B cell (primary cell): ENCODE measurements at regions of chr17 and their contacts with region 1.

Region 1: DNA sequence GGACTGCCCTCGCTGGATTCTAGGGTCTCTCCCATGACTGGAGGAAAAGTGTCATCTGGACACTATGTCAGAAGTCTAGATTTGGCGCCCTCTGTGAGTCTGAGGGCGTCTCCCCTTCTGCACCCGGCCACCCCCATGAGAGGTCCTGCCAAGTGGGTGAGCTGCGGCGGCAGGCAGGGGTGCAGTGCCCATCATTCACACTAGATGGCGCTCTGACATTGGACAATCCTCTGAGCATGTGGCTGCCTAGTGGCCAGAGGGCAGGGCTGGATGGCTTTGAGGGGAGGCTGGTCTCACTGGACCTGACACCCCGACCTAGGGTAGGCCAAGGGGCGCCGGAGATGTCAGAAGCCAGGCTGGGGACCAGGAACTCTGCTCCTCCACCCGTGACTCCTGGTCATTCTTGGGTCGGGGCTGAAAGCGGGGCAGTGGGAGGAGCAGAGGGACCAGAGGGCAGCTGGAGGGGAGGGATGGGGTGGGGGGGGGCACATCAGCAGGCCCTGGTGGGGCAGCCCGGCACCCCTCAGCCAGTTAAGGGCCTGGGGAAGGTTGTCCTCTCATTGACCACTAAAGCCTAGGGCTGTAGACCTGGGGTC is 28.0 kb downstream of the MRM1 start:
- DNase-seq: peak; percentile 80
- ATAC-seq: peak; percentile 93
- H3K4me3 ChIP-seq: no peak overlapping the region
- H3K4me3 Mint-ChIP-seq: no peak overlapping the region
- H3K27ac ChIP-seq: no peak overlapping the region
- H3K27ac Mint-ChIP-seq: no peak overlapping the region
- H3K4me1 ChIP-seq: no peaks in the 10 kb centered on the region
- H3K4me1 Mint-ChIP-seq: no peaks in the 10 kb centered on the region
- H3K27me3 ChIP-seq: peaks cover 0 to 5% (median 2%) of the 10 kb centered on the region in 4 experiments
- H3K27me3 Mint-ChIP-seq: peaks cover 15% of the 10 kb centered on the region
- CTCF ChIP-seq: peak; percentile 99

Region 2: GRCh38 chr17:36576793-36577192 is 52.6 kb before region 1 on chr17:
- CTCF ChIA-PET with region 1: no interaction called
- POLR2A ChIA-PET with region 1: no interaction called
- intact Hi-C with region 1: no loop called
- DNase-seq: no peak
- ATAC-seq: no peak
- H3K4me3 ChIP-seq: no peak overlapping the region
- H3K4me3 Mint-ChIP-seq: no peak overlapping the region
- H3K27ac ChIP-seq: no peak overlapping the region
- H3K27ac Mint-ChIP-seq: no peak overlapping the region
- H3K4me1 ChIP-seq: no peaks in the 10 kb centered on the region
- H3K4me1 Mint-ChIP-seq: no peaks in the 10 kb centered on the region
- H3K27me3 ChIP-seq: no peaks in the 10 kb centered on the region
- H3K27me3 Mint-ChIP-seq: no peaks in the 10 kb centered on the region
- CTCF ChIP-seq: no peak

Region 3: GRCh38 chr17:36640346-36640745 is 11.0 kb after region 1 on chr17:
- CTCF ChIA-PET with region 1: interaction called, 14 read pairs
- POLR2A ChIA-PET with region 1: no interaction called
- intact Hi-C with region 1: no loop called
- DNase-seq: no peak
- ATAC-seq: no peak
- H3K4me3 ChIP-seq: no peak overlapping the region
- H3K4me3 Mint-ChIP-seq: no peak overlapping the region
- H3K27ac ChIP-seq: no peak overlapping the region
- H3K27ac Mint-ChIP-seq: no peak overlapping the region
- H3K4me1 ChIP-seq: peaks cover 10 to 12% of the 10 kb centered on the region in 2 donors
- H3K4me1 Mint-ChIP-seq: peaks cover 12% of the 10 kb centered on the region
- H3K27me3 ChIP-seq: peaks cover 0 to 56% (median 25%) of the 10 kb centered on the region in 4 experiments
- H3K27me3 Mint-ChIP-seq: peaks cover 58% of the 10 kb centered on the region
- CTCF ChIP-seq: no peak

Region 4: DNA sequence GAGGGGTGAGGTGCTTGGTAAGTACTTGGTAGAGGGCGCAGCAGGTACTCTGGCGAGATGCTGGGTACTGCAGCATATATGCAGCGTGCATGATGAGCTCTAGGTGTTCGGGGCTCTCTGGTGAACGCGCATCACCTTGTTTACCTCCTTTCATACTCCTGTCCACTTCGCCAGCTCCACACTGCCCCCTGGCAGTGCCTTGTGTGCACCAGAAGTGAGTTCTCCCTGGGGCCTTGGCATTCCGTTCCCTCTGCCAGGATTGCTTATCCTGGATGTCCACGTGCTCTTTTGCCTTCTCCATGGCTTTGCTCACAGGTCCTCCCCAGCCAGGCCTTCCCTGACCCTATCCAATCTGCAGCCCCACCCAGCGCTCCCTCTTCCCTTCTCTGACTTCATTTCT is 126.2 kb after region 1 on chr17:
- CTCF ChIA-PET with region 1: interaction called, 24 read pairs
- POLR2A ChIA-PET with region 1: no interaction called
- intact Hi-C with region 1: no loop called
- DNase-seq: peak; percentile 17
- ATAC-seq: no peak
- H3K4me3 ChIP-seq: no peak overlapping the region
- H3K4me3 Mint-ChIP-seq: no peak overlapping the region
- H3K27ac ChIP-seq: no peak overlapping the region
- H3K27ac Mint-ChIP-seq: no peak overlapping the region
- H3K4me1 ChIP-seq: no peaks in the 10 kb centered on the region
- H3K4me1 Mint-ChIP-seq: no peaks in the 10 kb centered on the region
- H3K27me3 ChIP-seq: peaks cover 0 to 2% (median 0%) of the 10 kb centered on the region in 4 experiments
- H3K27me3 Mint-ChIP-seq: peaks cover 30% of the 10 kb centered on the region
- CTCF ChIP-seq: no peak

Region 5: GRCh38 chr17:37047631-37048104 is 418.3 kb after region 1 on chr17:
- CTCF ChIA-PET with region 1: interaction called, 150 read pairs
- POLR2A ChIA-PET with region 1: no interaction called
- intact Hi-C with region 1: no loop called
- DNase-seq: peak; percentile 80
- ATAC-seq: peak; percentile 62
- H3K4me3 ChIP-seq: no peak overlapping the region
- H3K4me3 Mint-ChIP-seq: no peak overlapping the region
- H3K27ac ChIP-seq: no peak overlapping the region
- H3K27ac Mint-ChIP-seq: no peak overlapping the region
- H3K4me1 ChIP-seq: peaks cover 3 to 6% of the 10 kb centered on the region in 2 donors
- H3K4me1 Mint-ChIP-seq: peaks cover 14% of the 10 kb centered on the region
- H3K27me3 ChIP-seq: no peaks in the 10 kb centered on the region
- H3K27me3 Mint-ChIP-seq: no peaks in the 10 kb centered on the region
- CTCF ChIP-seq: peak; percentile 78

Region 6: GRCh38 chr17:37174205-37174604 is 544.9 kb after region 1 on chr17:
- CTCF ChIA-PET with region 1: no interaction called
- POLR2A ChIA-PET with region 1: no interaction called
- intact Hi-C with region 1: no loop called
- DNase-seq: no peak
- ATAC-seq: no peak
- H3K4me3 ChIP-seq: no peak overlapping the region
- H3K4me3 Mint-ChIP-seq: no peak overlapping the region
- H3K27ac ChIP-seq: no peak overlapping the region
- H3K27ac Mint-ChIP-seq: no peak overlapping the region
- H3K4me1 ChIP-seq: no peaks in the 10 kb centered on the region
- H3K4me1 Mint-ChIP-seq: no peaks in the 10 kb centered on the region
- H3K27me3 ChIP-seq: no peaks in the 10 kb centered on the region
- H3K27me3 Mint-ChIP-seq: no peaks in the 10 kb centered on the region
- CTCF ChIP-seq: no peak

Region 7: GRCh38 chr17:37239690-37240334 is 610.5 kb after region 1 on chr17:
- CTCF ChIA-PET with region 1: interaction called, 32 read pairs
- POLR2A ChIA-PET with region 1: no interaction called
- intact Hi-C with region 1: no loop called
- DNase-seq: peak; percentile 29
- ATAC-seq: no peak
- H3K4me3 ChIP-seq: no peak overlapping the region
- H3K4me3 Mint-ChIP-seq: no peak overlapping the region
- H3K27ac ChIP-seq: no peak overlapping the region
- H3K27ac Mint-ChIP-seq: no peak overlapping the region
- H3K4me1 ChIP-seq: no peaks in the 10 kb centered on the region
- H3K4me1 Mint-ChIP-seq: no peaks in the 10 kb centered on the region
- H3K27me3 ChIP-seq: no peaks in the 10 kb centered on the region
- H3K27me3 Mint-ChIP-seq: no peaks in the 10 kb centered on the region
- CTCF ChIP-seq: peak; percentile 71

Region 8: DNA sequence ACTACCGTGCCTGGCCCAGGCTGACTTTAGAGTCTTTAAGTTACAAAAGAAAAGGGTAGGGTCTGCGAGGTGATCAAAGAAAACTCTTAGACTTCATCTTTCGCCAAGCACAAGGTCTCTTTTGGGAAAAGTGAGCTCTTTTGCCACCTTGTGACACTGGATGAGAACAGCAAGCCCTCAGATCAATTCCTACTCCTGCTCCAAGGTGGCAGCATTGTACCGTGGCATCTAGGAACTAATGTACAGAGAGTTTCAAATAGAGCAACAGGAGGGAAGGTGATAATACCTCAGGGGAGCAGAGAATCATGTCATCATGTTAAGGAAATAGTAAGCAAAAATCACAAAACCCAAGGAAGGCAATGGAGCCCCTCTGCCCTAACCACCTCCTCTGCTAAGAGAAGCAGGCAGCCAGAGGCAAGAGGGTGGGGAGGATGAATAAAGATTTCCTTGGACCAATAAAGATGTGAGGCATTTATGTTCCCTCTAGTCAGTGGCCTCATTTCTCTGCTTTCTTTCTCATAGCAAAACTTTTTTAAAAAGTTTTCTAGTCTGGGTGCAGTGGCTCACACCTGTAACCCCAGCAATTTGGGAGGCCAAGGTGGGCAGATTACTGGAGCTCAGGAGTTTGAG is 744.3 kb after region 1 on chr17:
- CTCF ChIA-PET with region 1: interaction called, 4 read pairs
- POLR2A ChIA-PET with region 1: no interaction called
- intact Hi-C with region 1: loop called (anchors 2 kb)
- DNase-seq: peak; percentile 73
- ATAC-seq: peak; percentile 85
- H3K4me3 ChIP-seq: no peak overlapping the region
- H3K4me3 Mint-ChIP-seq: no peak overlapping the region
- H3K27ac ChIP-seq: no peak overlapping the region
- H3K27ac Mint-ChIP-seq: no peak overlapping the region
- H3K4me1 ChIP-seq: no peaks in the 10 kb centered on the region
- H3K4me1 Mint-ChIP-seq: peaks cover 3% of the 10 kb centered on the region
- H3K27me3 ChIP-seq: no peaks in the 10 kb centered on the region
- H3K27me3 Mint-ChIP-seq: no peaks in the 10 kb centered on the region
- CTCF ChIP-seq: peak; percentile 83